Panc1 (cell line): ENCODE measurements at regions of chr10 and their contacts with region 1.

Region 1: GRCh38 chr10:72048450-72049124 is 39.8 kb downstream of the SPOCK2 start:
- DNase-seq: peak; percentile 96
- ATAC-seq: peak; percentile 91
- H3K4me3 ChIP-seq: no peak overlapping the region
- H3K27ac ChIP-seq: peak overlapping the region; percentile 73
- H3K4me1 ChIP-seq: peaks cover 11% of the 10 kb centered on the region
- H3K27me3 ChIP-seq: no peaks in the 10 kb centered on the region
- CTCF ChIP-seq: peak; percentile 100

Region 2: DNA sequence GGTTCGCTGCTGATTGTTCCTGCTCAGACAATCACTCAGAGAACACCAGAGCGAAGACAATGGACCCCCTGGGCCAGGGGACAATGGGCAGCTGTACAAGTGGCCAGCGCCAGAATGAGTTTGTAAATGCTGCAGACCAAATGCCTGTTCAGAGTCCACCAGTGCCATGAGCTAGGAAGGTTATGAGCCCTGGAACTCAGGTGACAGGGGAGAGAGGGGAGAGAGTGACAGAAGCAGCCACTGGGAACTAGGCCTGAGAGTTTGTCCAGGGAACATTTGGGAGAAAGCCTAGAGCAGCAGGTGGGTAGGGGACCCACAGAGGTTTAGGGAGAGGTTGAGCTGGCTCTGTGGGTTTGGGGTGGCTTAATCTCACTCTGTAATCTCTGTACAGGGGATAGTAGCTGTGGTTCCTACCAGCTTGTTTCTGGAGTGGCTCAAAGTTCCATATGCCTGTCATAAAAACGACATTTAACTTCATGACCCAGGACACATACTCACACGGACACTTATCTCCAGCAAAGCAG is 389.4 kb before region 1 on chr10:
- CTCF ChIA-PET with region 1: interaction called, 11 read pairs
- POLR2A ChIA-PET with region 1: no interaction called
- in situ Hi-C with region 1: no loop called
- intact Hi-C with region 1: no loop called
- DNase-seq: no peak
- ATAC-seq: no peak
- H3K4me3 ChIP-seq: no peak overlapping the region
- H3K27ac ChIP-seq: no peak overlapping the region
- H3K4me1 ChIP-seq: no peaks in the 10 kb centered on the region
- H3K27me3 ChIP-seq: no peaks in the 10 kb centered on the region
- CTCF ChIP-seq: no peak

Region 3: GRCh38 chr10:71905164-71905563 is 143.4 kb before region 1 on chr10:
- CTCF ChIA-PET with region 1: no interaction called
- POLR2A ChIA-PET with region 1: no interaction called
- in situ Hi-C with region 1: no loop called
- intact Hi-C with region 1: no loop called
- DNase-seq: no peak
- ATAC-seq: no peak
- H3K4me3 ChIP-seq: no peak overlapping the region
- H3K27ac ChIP-seq: no peak overlapping the region
- H3K4me1 ChIP-seq: no peaks in the 10 kb centered on the region
- H3K27me3 ChIP-seq: no peaks in the 10 kb centered on the region
- CTCF ChIP-seq: no peak

Region 4: DNA sequence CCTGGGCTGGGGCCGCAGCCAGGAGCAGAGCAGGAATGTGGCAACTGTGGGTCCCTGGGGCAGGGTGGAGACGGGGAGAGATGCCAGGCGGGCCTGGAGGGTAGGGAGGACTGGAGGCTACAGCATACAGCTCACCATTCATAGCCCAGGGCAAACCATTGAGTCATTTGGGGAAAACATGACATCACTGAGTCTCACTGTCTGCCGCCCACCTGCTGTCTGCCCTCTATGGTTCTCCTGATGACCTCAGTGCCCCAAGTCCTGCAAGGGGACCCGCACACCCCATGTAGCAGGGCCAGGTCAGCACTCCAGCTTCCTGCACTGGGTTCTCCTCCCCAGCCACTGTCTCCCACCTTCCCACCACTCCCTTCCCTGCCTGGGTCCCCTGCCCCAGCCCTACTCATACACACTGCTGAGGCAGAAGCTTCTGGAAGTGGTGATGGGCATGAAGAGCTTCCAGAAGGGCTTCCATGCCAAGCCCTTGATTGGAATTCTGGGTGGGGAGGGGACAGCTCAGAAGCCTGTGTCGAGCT is 74.0 kb before region 1 on chr10:
- CTCF ChIA-PET with region 1: interaction called, 8 read pairs
- POLR2A ChIA-PET with region 1: interaction called, 3 read pairs
- in situ Hi-C with region 1: no loop called
- intact Hi-C with region 1: loop called (anchors 5 kb)
- DNase-seq: peak; percentile 45
- ATAC-seq: peak; percentile 32
- H3K4me3 ChIP-seq: no peak overlapping the region
- H3K27ac ChIP-seq: peak overlapping the region; percentile 79
- H3K4me1 ChIP-seq: peaks cover 96% of the 10 kb centered on the region
- H3K27me3 ChIP-seq: no peaks in the 10 kb centered on the region
- CTCF ChIP-seq: no peak

Region 5: DNA sequence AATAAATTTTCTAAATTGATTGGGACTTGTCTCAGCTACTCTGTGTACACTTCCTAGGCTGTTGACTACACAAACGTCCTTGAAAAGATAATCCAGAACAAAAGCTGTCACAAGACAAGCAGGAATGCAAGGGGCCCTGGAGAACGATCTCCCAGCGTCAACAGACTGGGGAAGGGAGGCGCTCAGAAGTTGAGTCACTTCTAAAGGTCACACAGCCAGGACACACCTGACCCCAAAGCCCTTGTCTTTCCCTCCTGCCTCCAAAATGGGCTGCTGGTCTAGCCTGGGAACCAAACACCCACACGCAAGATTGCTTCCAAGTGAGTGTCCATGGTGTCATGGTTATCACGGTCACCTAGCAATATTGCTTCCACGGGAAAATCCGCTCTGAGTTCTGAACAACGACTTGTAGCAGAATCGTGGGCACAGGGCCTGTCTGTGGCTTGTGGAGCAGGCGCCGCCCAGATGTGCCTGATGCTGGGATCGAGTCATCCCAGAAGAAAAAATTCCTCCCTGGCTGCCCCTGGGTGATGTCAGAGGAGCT is 10.1 kb before region 1 on chr10:
- CTCF ChIA-PET with region 1: interaction called, 10 read pairs
- POLR2A ChIA-PET with region 1: no interaction called
- in situ Hi-C with region 1: no loop called
- intact Hi-C with region 1: no loop called
- DNase-seq: no peak
- ATAC-seq: no peak
- H3K4me3 ChIP-seq: no peak overlapping the region
- H3K27ac ChIP-seq: peak overlapping the region; percentile 11; the same call in 1 of the 2 replicates
- H3K4me1 ChIP-seq: peaks cover 19% of the 10 kb centered on the region
- H3K27me3 ChIP-seq: no peaks in the 10 kb centered on the region
- CTCF ChIP-seq: no peak

Region 6: GRCh38 chr10:72095195-72095594 is 46.6 kb after region 1 on chr10:
- CTCF ChIA-PET with region 1: interaction called, 5 read pairs
- POLR2A ChIA-PET with region 1: interaction called, 12 read pairs
- in situ Hi-C with region 1: no loop called
- intact Hi-C with region 1: no loop called
- DNase-seq: no peak
- ATAC-seq: no peak
- H3K4me3 ChIP-seq: no peak overlapping the region
- H3K27ac ChIP-seq: no peak overlapping the region; the same call in 1 of the 2 replicates
- H3K4me1 ChIP-seq: peaks cover 40% of the 10 kb centered on the region
- H3K27me3 ChIP-seq: no peaks in the 10 kb centered on the region
- CTCF ChIP-seq: no peak

Region 7: DNA sequence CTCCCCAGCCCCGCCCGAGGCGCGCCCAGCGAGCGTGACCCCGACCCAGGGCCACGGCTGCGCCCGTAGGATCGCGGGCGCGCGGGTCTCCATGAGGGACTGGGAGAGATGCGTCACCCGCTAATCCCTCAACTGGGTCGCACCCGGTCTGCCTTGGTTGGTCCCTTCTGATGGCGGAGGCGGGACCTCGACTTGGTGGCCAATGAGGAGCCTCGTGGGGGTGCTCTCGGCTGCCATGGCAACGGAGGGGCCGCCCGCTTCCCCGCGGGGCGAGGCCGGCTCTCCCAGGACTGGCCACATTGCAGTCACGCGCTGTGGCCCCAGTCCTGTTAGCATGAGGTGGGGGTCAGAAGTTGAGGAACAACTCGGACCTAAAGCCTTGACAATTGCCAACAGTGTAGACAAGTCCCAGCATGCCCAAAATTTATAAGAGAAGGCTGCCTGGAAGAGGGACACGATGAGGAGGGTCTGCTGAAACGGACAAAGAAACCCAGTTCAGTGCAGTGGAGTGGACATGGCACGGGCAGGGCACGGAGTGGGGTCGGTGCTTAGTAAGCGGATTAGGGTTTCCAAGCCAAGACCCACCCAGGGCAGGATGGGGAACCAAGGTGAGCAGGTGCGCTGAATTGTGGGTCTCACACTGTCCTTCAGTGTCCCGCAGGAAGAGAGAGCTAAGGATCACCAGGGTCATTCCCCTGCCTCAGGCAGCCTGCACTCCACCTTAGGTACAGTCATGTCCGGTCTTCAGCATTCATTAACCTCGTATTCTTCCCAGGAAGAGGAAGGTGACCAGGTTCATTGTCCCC is 249.6 kb after region 1 on chr10:
- CTCF ChIA-PET with region 1: no interaction called
- POLR2A ChIA-PET with region 1: no interaction called
- in situ Hi-C with region 1: no loop called
- intact Hi-C with region 1: no loop called
- DNase-seq: peak; percentile 88
- ATAC-seq: peak; percentile 97
- H3K4me3 ChIP-seq: peak overlapping the region; percentile 59 to 84
- H3K27ac ChIP-seq: peak overlapping the region; percentile 94
- H3K4me1 ChIP-seq: peaks cover 30% of the 10 kb centered on the region
- H3K27me3 ChIP-seq: no peaks in the 10 kb centered on the region
- CTCF ChIP-seq: no peak